Colonic mucosa (tissue), 4 donors: ENCODE measurements at regions of chr20 and their contacts with region 1.

Region 1: GRCh38 chr20:49534255-49534712 is 33.7 kb downstream of the PTGIS start:
- DNase-seq: peak; percentile 56
- H3K4me3 ChIP-seq: no peak overlapping the region
- H3K27ac ChIP-seq: no peak overlapping the region
- H3K4me1 ChIP-seq: no peaks in the 10 kb centered on the region
- H3K27me3 ChIP-seq: no peaks in the 10 kb centered on the region
- CTCF ChIP-seq: peak; percentile 80

Region 2: GRCh38 chr20:49330544-49331239 is 203.6 kb before region 1 on chr20:
- intact Hi-C with region 1: loop called (anchors 5 kb)
- DNase-seq: no peak
- H3K4me3 ChIP-seq: no peak overlapping the region
- H3K27ac ChIP-seq: no peak overlapping the region
- H3K4me1 ChIP-seq: no peaks in the 10 kb centered on the region
- H3K27me3 ChIP-seq: no peaks in the 10 kb centered on the region
- CTCF ChIP-seq: no peak